Activated CD4-positive, alpha-beta memory T cell treated with anti-CD3 and anti-CD28 coated beads for 36 hours (primary cell): ENCODE measurements at regions of chrX and their contacts with region 1.

Region 1: GRCh38 chrX:72121383-72121782 is 10.3 kb downstream of the RTL5 start:
- DNase-seq: peak; percentile 65
- H3K4me3 Mint-ChIP-seq: no peak overlapping the region
- H3K27ac Mint-ChIP-seq: peak overlapping the region; percentile 70
- H3K4me1 Mint-ChIP-seq: peaks cover 57% of the 10 kb centered on the region
- H3K27me3 Mint-ChIP-seq: no peaks in the 10 kb centered on the region

Region 2: GRCh38 chrX:72100824-72101351 is 20.5 kb before region 1 on chrX:
- CTCF ChIA-PET with region 1: interaction called, 19 read pairs
- POLR2A ChIA-PET with region 1: interaction called, 3 read pairs
- intact Hi-C with region 1: loop called (anchors 1 kb)
- DNase-seq: peak; percentile 87
- H3K4me3 Mint-ChIP-seq: peak overlapping the region; percentile 60
- H3K27ac Mint-ChIP-seq: peak overlapping the region; percentile 74
- H3K4me1 Mint-ChIP-seq: peaks cover 58% of the 10 kb centered on the region
- H3K27me3 Mint-ChIP-seq: no peaks in the 10 kb centered on the region

Region 3: DNA sequence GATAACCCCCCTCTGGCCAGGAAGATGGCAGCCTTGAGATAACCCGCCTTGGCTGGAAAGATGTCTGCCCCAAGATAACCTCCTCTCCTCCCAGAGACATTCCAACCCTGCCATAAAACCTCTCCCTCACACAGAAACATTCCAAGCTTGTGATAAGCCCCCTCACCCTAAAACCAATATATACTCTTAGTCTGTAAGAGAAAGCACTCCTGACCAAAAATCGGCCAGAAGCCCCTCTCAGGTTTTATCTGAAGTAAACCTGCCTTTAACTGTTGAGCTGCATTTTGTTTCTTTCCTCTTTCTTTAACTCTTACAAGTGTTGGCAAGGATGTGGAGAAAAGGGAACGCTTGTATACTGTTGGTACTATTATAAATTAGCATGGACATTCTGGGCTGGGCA is 108.9 kb after region 1 on chrX:
- CTCF ChIA-PET with region 1: no interaction called
- POLR2A ChIA-PET with region 1: no interaction called
- intact Hi-C with region 1: no loop called
- DNase-seq: no peak
- H3K4me3 Mint-ChIP-seq: no peak overlapping the region
- H3K27ac Mint-ChIP-seq: no peak overlapping the region
- H3K4me1 Mint-ChIP-seq: no peaks in the 10 kb centered on the region
- H3K27me3 Mint-ChIP-seq: no peaks in the 10 kb centered on the region